GM13977 (cell line): ENCODE measurements at regions of chr5 and their contacts with region 1.

Region 1: DNA sequence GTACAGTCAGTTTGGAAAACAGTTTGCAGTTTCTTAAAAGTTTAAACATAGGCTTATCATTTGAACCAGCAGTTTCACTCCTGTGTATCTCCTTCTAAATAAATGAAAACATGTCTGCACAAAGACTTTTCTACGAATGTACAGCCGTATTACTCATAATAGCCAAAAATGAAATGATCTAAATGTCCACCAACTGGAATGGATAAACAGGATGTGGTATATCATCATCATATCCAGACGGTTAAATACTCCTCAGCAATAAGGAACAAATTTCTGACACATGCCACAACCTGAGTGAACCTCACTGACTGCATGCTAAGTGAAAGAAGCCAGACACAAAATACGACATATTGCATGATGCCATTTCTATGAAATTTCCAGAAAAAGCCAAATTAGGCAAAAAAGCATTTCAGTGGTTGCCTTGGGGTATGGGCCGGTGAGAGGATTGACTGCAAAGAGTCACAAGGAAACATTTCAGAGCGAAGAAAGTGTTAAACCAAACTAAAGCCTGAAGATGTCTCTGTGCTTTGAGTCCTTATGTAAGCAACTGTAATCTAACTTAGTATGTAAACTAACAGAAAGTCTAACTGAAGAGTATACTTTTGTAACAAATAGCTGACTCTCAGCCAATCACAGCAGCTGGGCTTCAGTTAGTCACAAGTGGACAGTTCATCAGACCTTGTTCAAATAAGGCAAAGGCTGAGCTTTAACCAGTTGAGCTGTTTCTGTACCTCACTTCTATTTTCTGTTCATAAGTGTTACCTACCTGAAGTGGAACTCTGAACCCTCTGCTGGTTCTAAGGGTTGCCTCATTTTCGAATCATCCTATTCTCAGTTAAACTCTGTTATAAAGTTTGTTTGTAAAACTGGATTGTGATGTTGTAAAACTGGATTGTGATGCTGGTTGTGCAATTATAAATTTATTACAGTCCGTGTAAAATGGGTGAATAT is 65.2 kb downstream of the TRIO start:
- DNase-seq: peak; percentile 50
- CTCF ChIP-seq: peak; percentile 36

Region 2: GRCh38 chr5:14156650-14157493 is 51.5 kb before region 1 on chr5:
- in situ Hi-C with region 1: loop called (anchors 10 kb)
- DNase-seq: peak; percentile 65
- CTCF ChIP-seq: no peak